GM12878 (cell line): ENCODE measurements at regions of chr2 and their contacts with region 1.

Region 1: GRCh38 chr2:54570925-54571694 is 115.0 kb downstream of the SPTBN1 start:
- DNase-seq: peak; percentile 98
- ATAC-seq: peak; percentile 55
- H3K4me3 ChIP-seq: peak overlapping the region; percentile 49; the same call in 1 of the 2 replicates
- H3K27ac ChIP-seq: peak overlapping the region; percentile 100
- H3K4me1 ChIP-seq: peaks cover 73% of the 10 kb centered on the region
- H3K27me3 ChIP-seq: no peaks in the 10 kb centered on the region
- CTCF ChIP-seq: no peak
- EP300 ChIP-seq: peak; percentile 80 to 96
- POLR2A ChIP-seq: peak; percentile 74
- RAD21 ChIP-seq: no peak; the same call in 1 of the 2 replicates

Region 2: GRCh38 chr2:54558188-54559005 is 12.7 kb before region 1 on chr2:
- CTCF ChIA-PET with region 1: interaction called, 79 read pairs
- POLR2A ChIA-PET with region 1: interaction called, 504 read pairs
- RAD21 ChIA-PET with region 1: interaction called, 195 read pairs
- SMC1A ChIA-PET with region 1: interaction called, 569 read pairs
- in situ Hi-C with region 1: no loop called
- intact Hi-C with region 1: loop called (anchors 1 kb)
- DNase-seq: no peak
- ATAC-seq: peak; percentile 63
- H3K4me3 ChIP-seq: peak overlapping the region; percentile 99
- H3K27ac ChIP-seq: peak overlapping the region; percentile 96
- H3K4me1 ChIP-seq: peaks cover 18% of the 10 kb centered on the region
- H3K27me3 ChIP-seq: no peaks in the 10 kb centered on the region
- CTCF ChIP-seq: no peak
- EP300 ChIP-seq: no peak
- POLR2A ChIP-seq: peak; percentile 78
- RAD21 ChIP-seq: no peak

Region 3: DNA sequence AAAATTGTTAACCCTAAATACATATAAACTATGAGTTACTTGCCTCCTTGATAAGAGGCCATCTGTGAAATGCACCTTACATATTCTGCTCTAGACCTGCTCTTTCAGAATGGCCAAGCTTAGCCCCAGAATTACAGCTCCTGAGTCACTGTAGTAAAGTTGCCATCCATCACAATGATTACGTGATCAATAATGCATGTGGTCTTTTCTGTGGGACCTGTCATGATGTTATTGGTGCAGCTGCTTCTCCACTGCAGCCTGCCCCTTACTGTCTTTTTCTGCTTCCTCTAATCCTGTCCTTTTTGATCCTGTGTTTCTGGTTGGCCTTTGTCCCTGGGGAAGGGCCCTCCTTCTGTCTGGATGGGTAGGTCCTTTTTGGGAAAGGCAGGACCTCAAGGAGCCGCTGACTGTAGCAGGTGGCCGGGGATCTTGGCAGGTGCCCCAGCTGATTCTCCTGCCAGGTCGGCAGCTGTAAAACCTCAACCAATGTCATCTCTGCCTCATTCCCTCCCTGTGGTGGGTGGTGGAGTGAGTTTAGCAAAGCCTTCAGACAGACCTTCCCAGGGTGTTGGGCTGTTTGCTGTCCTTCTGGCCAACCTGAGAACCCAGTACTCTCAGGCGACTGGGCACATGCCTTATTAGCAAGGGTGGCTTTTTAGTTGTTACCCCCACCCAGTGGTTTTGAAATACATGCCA is 26.2 kb after region 1 on chr2:
- CTCF ChIA-PET with region 1: interaction called, 3 read pairs
- POLR2A ChIA-PET with region 1: interaction called, 7 read pairs
- RAD21 ChIA-PET with region 1: interaction called, 8 read pairs
- SMC1A ChIA-PET with region 1: interaction called, 10 read pairs
- in situ Hi-C with region 1: no loop called
- intact Hi-C with region 1: no loop called
- DNase-seq: no peak
- ATAC-seq: peak; percentile 65
- H3K4me3 ChIP-seq: no peak overlapping the region
- H3K27ac ChIP-seq: peak overlapping the region; percentile 84
- H3K4me1 ChIP-seq: peaks cover 49% of the 10 kb centered on the region
- H3K27me3 ChIP-seq: no peaks in the 10 kb centered on the region
- CTCF ChIP-seq: no peak
- EP300 ChIP-seq: no peak
- POLR2A ChIP-seq: peak; percentile 21; the same call in 1 of the 2 replicates
- RAD21 ChIP-seq: peak; percentile 23; the same call in 1 of the 2 replicates

Region 4: GRCh38 chr2:54606393-54606969 is 35.4 kb after region 1 on chr2:
- CTCF ChIA-PET with region 1: interaction called, 3 read pairs
- POLR2A ChIA-PET with region 1: interaction called, 4 read pairs
- RAD21 ChIA-PET with region 1: interaction called, 8 read pairs
- SMC1A ChIA-PET with region 1: interaction called, 14 read pairs
- in situ Hi-C with region 1: no loop called
- intact Hi-C with region 1: no loop called
- DNase-seq: no peak
- ATAC-seq: no peak
- H3K4me3 ChIP-seq: no peak overlapping the region
- H3K27ac ChIP-seq: no peak overlapping the region
- H3K4me1 ChIP-seq: peaks cover 24% of the 10 kb centered on the region
- H3K27me3 ChIP-seq: no peaks in the 10 kb centered on the region
- CTCF ChIP-seq: no peak
- EP300 ChIP-seq: no peak
- POLR2A ChIP-seq: no peak
- RAD21 ChIP-seq: no peak

Region 5: GRCh38 chr2:54673501-54673998 is 102.4 kb after region 1 on chr2:
- CTCF ChIA-PET with region 1: interaction called, 8 read pairs
- POLR2A ChIA-PET with region 1: interaction called, 4 read pairs
- RAD21 ChIA-PET with region 1: interaction called, 8 read pairs
- SMC1A ChIA-PET with region 1: interaction called, 20 read pairs
- in situ Hi-C with region 1: no loop called
- intact Hi-C with region 1: loop called (anchors 2 kb)
- DNase-seq: no peak
- ATAC-seq: peak; percentile 76
- H3K4me3 ChIP-seq: no peak overlapping the region
- H3K27ac ChIP-seq: peak overlapping the region; percentile 70
- H3K4me1 ChIP-seq: peaks cover 20% of the 10 kb centered on the region
- H3K27me3 ChIP-seq: no peaks in the 10 kb centered on the region
- CTCF ChIP-seq: no peak
- EP300 ChIP-seq: no peak
- POLR2A ChIP-seq: no peak
- RAD21 ChIP-seq: no peak

Region 6: DNA sequence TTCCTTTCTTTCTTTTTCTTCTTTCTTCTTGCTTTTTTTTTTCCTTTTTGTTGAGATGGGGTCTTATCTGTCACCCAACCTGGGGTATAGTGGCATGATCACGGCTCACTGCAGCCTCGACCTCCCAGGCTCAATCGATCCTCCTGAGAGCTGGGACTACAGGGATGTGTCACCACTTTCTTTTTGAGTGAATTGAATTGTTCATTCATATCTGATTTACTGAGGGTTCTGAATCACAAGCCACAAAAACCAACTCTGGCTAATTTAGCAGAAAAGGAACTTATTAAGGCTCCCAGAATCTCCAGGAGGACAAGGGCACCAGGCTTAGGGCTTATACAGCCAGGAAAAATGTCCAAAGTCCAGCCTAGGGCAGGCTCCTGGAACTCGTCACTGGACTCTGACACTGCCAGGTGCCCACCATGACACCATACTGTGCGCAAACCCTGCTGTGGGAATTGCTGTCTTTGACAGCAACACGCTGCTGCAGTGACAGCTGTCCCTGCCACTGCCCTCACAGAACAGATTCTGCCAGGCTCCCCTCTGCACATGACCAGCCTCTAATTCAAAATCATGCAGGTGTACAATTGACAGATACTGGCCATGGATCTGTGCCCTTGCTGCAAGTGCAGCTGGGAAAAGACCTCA is 109.4 kb after region 1 on chr2:
- CTCF ChIA-PET with region 1: interaction called, 8 read pairs
- POLR2A ChIA-PET with region 1: no interaction called
- RAD21 ChIA-PET with region 1: interaction called, 4 read pairs
- SMC1A ChIA-PET with region 1: interaction called, 20 read pairs
- in situ Hi-C with region 1: no loop called
- intact Hi-C with region 1: loop called (anchors 2 kb)
- DNase-seq: peak; percentile 77
- ATAC-seq: peak; percentile 81
- H3K4me3 ChIP-seq: peak overlapping the region; percentile 34; the same call in 1 of the 2 replicates
- H3K27ac ChIP-seq: peak overlapping the region; percentile 47
- H3K4me1 ChIP-seq: peaks cover 31% of the 10 kb centered on the region
- H3K27me3 ChIP-seq: no peaks in the 10 kb centered on the region; a peak in 1 of 4 replicates
- CTCF ChIP-seq: no peak
- EP300 ChIP-seq: peak; percentile 48 to 84; a peak in 3 of 4 replicates
- POLR2A ChIP-seq: no peak
- RAD21 ChIP-seq: no peak

Region 7: DNA sequence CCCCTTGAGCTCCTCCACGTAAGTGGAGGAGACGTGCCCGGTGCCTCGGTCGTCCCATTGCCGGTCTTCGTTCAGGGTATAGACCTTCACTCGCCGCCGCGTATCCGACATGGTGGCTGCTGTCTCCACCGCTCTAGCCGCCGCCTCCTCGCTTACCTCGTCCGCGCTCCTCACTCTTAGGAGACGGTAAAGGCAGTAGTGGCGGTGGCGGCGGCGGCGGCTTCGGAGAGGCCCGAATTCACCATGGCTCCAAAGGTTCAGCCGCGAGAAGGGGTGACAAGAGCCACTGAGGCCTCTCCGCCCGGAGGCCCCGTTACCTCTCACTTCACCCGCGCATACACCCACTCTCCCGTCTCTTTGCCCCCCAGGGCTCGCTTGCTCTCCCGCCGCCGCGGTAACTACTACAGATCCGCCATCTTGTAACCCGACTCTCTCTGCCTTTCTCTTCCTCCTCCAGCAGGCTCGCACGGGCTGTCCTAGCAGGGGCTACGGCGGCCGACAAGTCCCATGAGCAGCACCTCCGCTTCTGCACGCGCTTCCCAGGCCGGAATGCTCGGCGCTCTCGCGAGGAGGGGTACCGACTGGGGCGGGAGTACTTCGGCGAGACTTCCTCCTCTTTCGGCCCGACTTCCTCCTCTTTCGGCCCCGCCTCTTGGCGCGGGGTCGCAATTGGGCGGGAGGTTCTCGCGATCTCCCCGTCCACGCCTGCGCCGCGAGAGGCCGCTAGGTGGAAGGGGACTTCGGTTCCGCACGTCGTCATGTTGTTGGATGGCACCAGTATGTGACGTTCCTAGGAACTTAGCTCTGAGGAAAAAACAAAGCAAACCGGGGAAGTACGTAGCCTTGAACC is 1046.3 kb after region 1 on chr2 and contains the start of gene PPP4R3B:
- CTCF ChIA-PET with region 1: no interaction called
- POLR2A ChIA-PET with region 1: no interaction called
- RAD21 ChIA-PET with region 1: no interaction called
- SMC1A ChIA-PET with region 1: no interaction called
- in situ Hi-C with region 1: no loop called
- intact Hi-C with region 1: loop called (anchors 10 kb)
- DNase-seq: peak; percentile 98
- ATAC-seq: peak; percentile 89
- H3K4me3 ChIP-seq: peak within 1 kb of the TSS; percentile 89
- H3K27ac ChIP-seq: peak within 1 kb of the TSS; percentile 94
- H3K4me1 ChIP-seq: peaks cover 3% of the 10 kb centered on the region
- H3K27me3 ChIP-seq: no peaks in the 10 kb centered on the region
- CTCF ChIP-seq: peak; percentile 32 to 33 (median 32); a peak in 4 of 6 replicates
- EP300 ChIP-seq: no peak
- POLR2A ChIP-seq: peak; percentile 98
- RAD21 ChIP-seq: no peak
- polyA plus RNA-seq, gene PPP4R3B: 10.9 to 15.3 TPM